ENCODE measurements at regions of chr12 and their contacts with region 1.

Region 1: DNA sequence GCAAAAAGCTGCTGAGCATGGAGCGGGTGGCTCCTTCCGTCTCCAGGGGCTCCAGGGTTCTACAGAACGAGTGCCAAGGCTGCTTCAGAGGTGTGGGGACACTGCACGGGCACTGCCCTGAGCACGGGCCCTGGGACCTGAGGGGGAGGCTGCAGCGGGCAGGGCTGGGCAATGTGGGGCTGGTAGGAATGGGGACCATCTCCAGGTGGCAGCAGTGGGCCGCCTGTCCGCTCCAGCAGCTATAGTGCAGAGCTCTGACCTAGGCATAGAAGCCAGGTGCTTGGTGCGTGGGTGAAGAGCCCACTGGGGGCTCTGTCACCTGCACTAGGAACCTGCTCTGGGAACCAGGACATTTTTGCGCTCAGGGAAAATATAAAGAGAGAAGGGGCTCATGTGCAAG is 22.3 kb downstream of the HDAC7 start:
- DNase-seq: peak in 1 of 2 experiments; percentile 55
- ATAC-seq: peak; percentile 55 to 79
- H3K4me3 ChIP-seq: no peak overlapping the region
- H3K27ac ChIP-seq: no peak overlapping the region
- H3K4me1 ChIP-seq: peaks cover 7% of the 10 kb centered on the region; the same call in 2 of the 3 replicates
- CTCF ChIP-seq: peak; percentile 43
- EP300 ChIP-seq: no peak
- POLR2A ChIP-seq: no peak
- RAD21 ChIP-seq: peak; percentile 71 to 77

Region 2: DNA sequence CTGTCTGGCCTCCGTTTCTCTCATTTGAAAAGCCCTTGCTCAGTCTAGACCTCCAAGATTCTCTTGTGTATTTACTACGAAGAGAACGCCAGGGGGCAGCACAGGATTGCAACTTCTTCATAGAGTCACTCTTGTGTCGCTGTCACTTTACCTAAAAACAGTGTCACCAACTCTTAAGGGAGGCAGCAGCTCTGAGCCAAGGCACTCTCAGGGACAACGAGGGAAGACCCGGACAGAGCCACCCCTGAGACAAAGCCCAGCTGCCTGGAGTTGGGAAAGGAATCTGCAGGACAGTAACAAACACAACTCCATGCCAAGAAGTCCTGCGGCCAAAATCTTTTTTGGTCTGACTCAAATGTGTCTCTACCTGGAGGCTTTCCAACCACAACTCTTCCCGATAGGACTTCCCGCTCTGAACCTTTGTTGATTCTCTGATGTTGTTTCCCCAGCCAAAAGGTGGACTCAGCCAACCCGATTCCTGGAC is 82.0 kb before region 1 on chr12:
- CTCF ChIA-PET with region 1: interaction called, 1,399 read pairs
- POLR2A ChIA-PET with region 1: no interaction called
- DNase-seq: peak; percentile 76 to 80
- ATAC-seq: peak; percentile 56 to 82; a peak in 4 of 6 replicates
- H3K4me3 ChIP-seq: no peak overlapping the region
- H3K27ac ChIP-seq: no peak overlapping the region
- H3K4me1 ChIP-seq: peaks cover 9% of the 10 kb centered on the region
- CTCF ChIP-seq: peak; percentile 93
- EP300 ChIP-seq: no peak
- POLR2A ChIP-seq: no peak
- RAD21 ChIP-seq: peak; percentile 90 to 93

Region 3: DNA sequence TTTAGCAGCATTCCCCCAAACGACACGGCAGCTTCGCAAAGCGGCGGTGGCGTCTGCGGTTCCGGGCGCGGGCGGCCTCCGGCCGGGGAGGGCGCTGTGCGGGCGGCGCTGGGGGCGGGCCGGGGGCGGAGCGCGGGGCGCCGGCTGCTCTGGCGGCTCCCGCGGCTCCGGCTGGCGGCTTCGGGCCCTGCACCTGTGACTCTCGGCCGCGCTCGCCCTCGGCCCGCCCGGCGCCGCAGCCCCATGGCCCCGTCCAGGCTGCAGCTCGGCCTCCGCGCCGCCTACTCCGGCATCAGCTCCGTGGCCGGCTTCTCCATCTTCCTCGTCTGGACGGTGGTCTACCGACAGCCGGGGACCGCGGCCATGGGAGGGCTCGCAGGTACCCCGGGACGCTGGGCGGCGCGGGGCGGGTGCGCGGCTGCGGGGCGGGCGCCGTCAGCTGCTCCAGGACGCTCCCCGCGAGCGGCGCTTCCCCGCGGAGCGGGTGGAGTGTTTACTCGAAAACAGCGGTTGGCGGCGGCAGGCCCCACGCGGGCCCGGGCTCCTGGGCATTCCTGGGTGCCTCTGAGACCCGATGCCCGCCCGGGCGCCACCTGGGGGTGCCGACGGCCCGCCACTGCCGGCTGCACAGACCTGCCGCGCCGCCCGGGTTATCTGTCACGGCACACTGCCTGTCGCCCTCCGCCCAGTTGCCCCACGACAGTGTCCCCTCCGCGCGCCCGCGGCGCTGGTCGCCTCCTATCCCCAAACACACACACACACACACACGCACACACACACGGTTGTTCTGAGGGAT is 24.2 kb before region 1 on chr12 and contains the start of gene SLC48A1:
- CTCF ChIA-PET with region 1: interaction called, 92 read pairs
- POLR2A ChIA-PET with region 1: no interaction called
- DNase-seq: peak; percentile 72 to 92
- ATAC-seq: peak; percentile 81 to 82
- H3K4me3 ChIP-seq: peak within 1 kb of the TSS; percentile 79
- H3K27ac ChIP-seq: peak within 1 kb of the TSS; percentile 84 to 96
- H3K4me1 ChIP-seq: peaks cover 71% of the 10 kb centered on the region
- CTCF ChIP-seq: peak; percentile 71
- EP300 ChIP-seq: no peak
- POLR2A ChIP-seq: peak; percentile 82
- RAD21 ChIP-seq: peak in 1 of 2 experiments; percentile 23; a peak in 1 of 5 replicates
- polyA plus RNA-seq, gene SLC48A1: 25.1 and 27.3 TPM in 2 replicates

Region 4: DNA sequence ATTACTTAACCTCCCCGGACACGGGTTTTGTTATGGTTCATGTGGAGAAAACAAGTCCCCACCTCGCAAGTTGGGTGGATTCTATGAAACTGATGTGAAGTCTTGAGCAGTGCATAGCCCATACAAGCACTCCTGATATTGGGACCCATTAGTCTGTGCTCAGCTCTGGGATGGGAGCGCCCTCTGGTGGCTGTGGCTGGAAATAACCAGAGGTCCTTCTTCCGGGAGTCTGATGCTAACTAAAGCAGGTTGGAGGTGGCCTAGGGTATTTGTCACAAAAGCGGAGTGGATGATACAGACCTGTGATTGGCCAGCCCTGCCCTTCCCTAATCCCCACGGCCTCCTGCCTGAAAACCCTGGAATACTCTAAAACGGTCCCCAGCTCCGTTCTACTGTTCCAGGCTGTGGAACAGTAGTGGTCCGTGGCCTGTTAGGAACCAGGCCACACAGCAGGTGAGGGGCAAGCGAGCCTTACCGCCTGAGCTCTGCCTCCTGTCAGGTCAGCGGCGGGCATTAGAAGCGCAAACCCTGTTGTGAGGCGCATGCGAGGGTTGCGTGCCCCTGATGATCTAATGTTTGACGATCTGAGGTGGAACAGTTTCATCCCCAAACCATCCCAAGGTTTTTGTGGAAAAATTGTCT is 18.0 kb before region 1 on chr12:
- CTCF ChIA-PET with region 1: interaction called, 92 read pairs
- POLR2A ChIA-PET with region 1: no interaction called
- DNase-seq: peak; percentile 86 to 90
- ATAC-seq: peak; percentile 67 to 84
- H3K4me3 ChIP-seq: no peak overlapping the region
- H3K27ac ChIP-seq: peak overlapping the region in 1 of 2 experiments; percentile 7; a peak in 1 of 6 replicates
- H3K4me1 ChIP-seq: peaks cover 47% of the 10 kb centered on the region
- CTCF ChIP-seq: peak; percentile 93
- EP300 ChIP-seq: no peak
- POLR2A ChIP-seq: no peak
- RAD21 ChIP-seq: peak; percentile 83 to 93

Region 5: GRCh38 chr12:47785036-47785886 is 12.2 kb before region 1 on chr12:
- CTCF ChIA-PET with region 1: interaction called, 92 read pairs
- POLR2A ChIA-PET with region 1: interaction called, 3 read pairs
- DNase-seq: no peak
- ATAC-seq: no peak
- H3K4me3 ChIP-seq: no peak overlapping the region
- H3K27ac ChIP-seq: no peak overlapping the region
- H3K4me1 ChIP-seq: no peaks in the 10 kb centered on the region
- CTCF ChIP-seq: no peak
- EP300 ChIP-seq: no peak
- POLR2A ChIP-seq: no peak
- RAD21 ChIP-seq: no peak

Region 6: GRCh38 chr12:47812797-47813510 is 15.5 kb after region 1 on chr12:
- CTCF ChIA-PET with region 1: interaction called, 20 read pairs
- POLR2A ChIA-PET with region 1: no interaction called
- DNase-seq: peak; percentile 74 to 85
- ATAC-seq: peak; percentile 77 to 85
- H3K4me3 ChIP-seq: peak overlapping the region; percentile 37
- H3K27ac ChIP-seq: peak overlapping the region; percentile 76 to 85
- H3K4me1 ChIP-seq: peaks cover 93% of the 10 kb centered on the region
- CTCF ChIP-seq: no peak
- EP300 ChIP-seq: no peak
- POLR2A ChIP-seq: no peak
- RAD21 ChIP-seq: no peak; a peak in 1 of 5 replicates

Region 7: DNA sequence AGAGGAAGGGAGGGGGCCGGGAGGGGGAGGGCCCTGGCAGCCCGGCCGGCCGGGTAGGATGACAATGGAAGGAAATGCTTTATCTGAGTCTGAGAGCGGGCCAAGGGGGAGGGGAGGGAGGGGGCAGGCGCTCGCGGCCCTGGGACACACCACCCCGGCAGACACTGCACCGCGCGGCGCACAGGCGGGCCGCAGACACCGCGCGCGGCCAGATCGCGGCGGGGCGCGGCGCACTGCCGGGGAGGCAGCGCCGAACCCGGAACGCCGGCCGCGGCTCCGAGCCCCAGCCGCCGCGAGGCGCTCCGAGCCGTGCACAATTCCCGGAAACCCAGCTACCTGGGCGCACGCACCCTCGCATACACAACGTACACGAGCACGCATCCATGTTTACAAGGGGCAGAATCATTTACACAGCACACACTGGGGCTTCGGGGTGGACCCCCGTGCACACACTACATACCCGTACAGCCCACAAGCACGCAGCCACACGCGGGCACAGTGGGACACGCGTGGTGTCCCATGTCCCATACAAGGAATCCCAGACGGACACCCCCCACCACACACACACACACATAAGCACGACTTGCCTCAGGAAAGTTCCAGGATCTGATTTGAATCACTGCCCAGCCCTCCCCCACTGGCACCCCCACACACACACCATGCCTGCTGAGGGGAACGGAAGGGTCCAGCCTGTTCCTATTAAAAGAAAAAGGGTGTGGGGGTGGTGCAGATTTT is 22.6 kb after region 1 on chr12 and contains the start of gene HDAC7:
- CTCF ChIA-PET with region 1: interaction called, 1,532 read pairs
- POLR2A ChIA-PET with region 1: no interaction called
- DNase-seq: peak; percentile 86 to 90
- ATAC-seq: peak; percentile 52 to 74
- H3K4me3 ChIP-seq: peak within 1 kb of the TSS; percentile 89
- H3K27ac ChIP-seq: peak within 1 kb of the TSS; percentile 96 to 100
- H3K4me1 ChIP-seq: peaks cover 68% of the 10 kb centered on the region
- CTCF ChIP-seq: no peak
- EP300 ChIP-seq: 0 out of 5 replicates have a peak, but pooled peaks have one; percentile 23 to 29
- POLR2A ChIP-seq: peak; percentile 82
- RAD21 ChIP-seq: no peak
- polyA plus RNA-seq, gene HDAC7: 17.2 and 20.8 TPM in 2 replicates